ENCODE measurements at regions of chr12 and their contacts with region 1.

Region 1: DNA sequence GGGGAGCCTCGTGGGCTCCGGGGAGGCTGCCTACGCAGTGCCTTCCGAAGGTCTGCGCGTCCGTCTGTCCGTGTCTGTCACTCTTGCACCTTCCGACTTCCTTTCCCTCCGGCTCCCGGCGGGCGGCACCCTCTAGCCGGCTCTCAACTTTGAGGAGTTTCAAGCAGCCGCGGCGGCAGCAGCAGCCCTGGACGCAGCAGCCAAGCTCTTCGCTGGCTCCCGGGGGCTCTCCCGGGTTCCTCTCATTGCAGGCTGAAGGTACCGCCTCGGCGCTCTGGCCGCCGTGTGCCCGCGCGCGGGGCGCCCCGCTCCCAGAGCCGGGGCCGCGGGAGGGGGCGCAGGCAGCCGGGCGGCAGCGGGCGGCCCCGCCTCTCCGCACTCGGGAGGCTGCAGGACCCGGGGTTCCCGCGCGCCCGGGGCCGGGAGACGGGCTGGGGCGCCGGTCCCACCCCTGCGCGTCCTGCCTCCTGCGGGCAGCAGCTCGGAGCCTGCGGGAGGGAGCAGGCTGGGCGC is at the starts of genes AMIGO2 and PCED1B:
- DNase-seq: peak; percentile 74 to 89 (median 76)
- ATAC-seq: peak; percentile 62 to 90 (median 74)
- H3K4me3 ChIP-seq: peak within 1 kb of the TSS; percentile 52 to 92 (median 74)
- H3K27ac ChIP-seq: peak within 1 kb of the TSS; percentile 74 to 95 (median 88)
- H3K4me1 ChIP-seq: peaks cover 0 to 58% (median 13%) of the 10 kb centered on the region in 12 donors
- H3K27me3 ChIP-seq: peaks cover 0 to 23% (median 0%) of the 10 kb centered on the region in 9 donors
- CTCF ChIP-seq: peak in 9 of 12 donors; percentile 21 to 56 (median 36)
- POLR2A ChIP-seq: no peak
- total RNA-seq, gene AMIGO2: 0.77 to 3.0 (median 1.5) TPM
- total RNA-seq, gene PCED1B: 0.39 to 9.5 (median 0.81) TPM in 7 of 9 donors, not detected in the others

Region 2: GRCh38 chr12:47156167-47156736 is 76.7 kb after region 1 on chr12:
- intact Hi-C with region 1: no loop called
- DNase-seq: peak in 2 of 5 donors; percentile 30 to 33
- ATAC-seq: peak in 3 of 4 donors; percentile 55 to 69 (median 68)
- H3K4me3 ChIP-seq: no peak overlapping the region
- H3K27ac ChIP-seq: peak overlapping the region in 1 of 12 donors; percentile 19
- H3K4me1 ChIP-seq: peaks cover 0 to 14% (median 9%) of the 10 kb centered on the region in 12 donors
- H3K27me3 ChIP-seq: no peaks in the 10 kb centered on the region
- CTCF ChIP-seq: no peak
- POLR2A ChIP-seq: no peak

Region 3: DNA sequence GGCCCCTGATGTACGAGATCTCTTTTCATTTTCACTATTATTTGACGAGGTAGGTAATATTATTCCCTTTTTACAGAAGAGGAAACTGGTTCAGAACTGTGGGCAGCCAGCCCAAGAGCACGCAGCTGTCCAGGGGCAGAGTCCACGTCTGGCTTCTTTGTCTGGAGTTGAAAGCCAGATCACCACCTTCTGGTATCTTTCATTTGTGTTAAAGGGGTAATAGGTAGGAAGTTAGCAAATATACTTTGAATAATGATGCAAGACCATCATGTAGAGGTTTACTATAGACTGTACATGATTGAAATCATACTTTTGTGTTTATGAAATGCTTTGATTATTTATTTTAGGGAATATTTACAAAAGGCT is 144.3 kb after region 1 on chr12:
- intact Hi-C with region 1: loop called in 1 of 10 experiments (anchors 10 kb)
- DNase-seq: peak in 4 of 5 donors; percentile 24 to 64 (median 51)
- ATAC-seq: peak in 2 of 4 donors; percentile 62 to 71
- H3K4me3 ChIP-seq: peak overlapping the region in 4 of 12 donors; percentile 10 to 25 (median 22)
- H3K27ac ChIP-seq: peak overlapping the region in 10 of 12 donors; percentile 11 to 55 (median 38)
- H3K4me1 ChIP-seq: peaks cover 0 to 34% (median 6%) of the 10 kb centered on the region in 12 donors
- H3K27me3 ChIP-seq: no peaks in the 10 kb centered on the region
- CTCF ChIP-seq: no peak
- POLR2A ChIP-seq: no peak

Region 4: DNA sequence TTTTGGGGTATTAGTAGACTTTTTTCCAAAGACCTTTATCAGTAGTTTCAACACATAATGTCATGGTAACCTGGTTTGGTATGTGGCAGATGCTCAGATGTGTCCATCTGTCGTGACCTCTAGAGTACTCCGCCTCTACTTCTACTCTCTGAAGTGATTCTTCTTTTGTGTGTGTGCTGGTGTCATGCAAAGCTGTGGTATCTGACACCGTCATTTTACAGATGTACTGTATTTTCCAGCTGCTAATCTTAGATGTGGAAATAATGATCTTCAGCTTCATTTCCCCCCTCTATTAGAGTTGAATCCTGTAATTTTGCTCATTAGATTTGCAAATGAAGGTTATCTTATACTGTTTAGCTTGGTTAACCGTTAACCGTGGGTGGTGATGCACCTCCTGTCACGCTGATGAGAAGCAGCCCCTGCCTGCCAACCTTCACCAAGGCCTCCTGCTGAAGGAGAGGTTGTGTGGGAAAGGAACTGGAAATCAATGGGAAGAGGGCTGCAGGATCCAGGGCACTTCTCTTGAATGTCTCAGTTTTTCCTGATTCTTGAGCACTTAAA is 222.7 kb after region 1 on chr12:
- intact Hi-C with region 1: loop called in 4 of 10 experiments (anchors 5 to 10 kb)
- DNase-seq: no peak
- ATAC-seq: no peak
- H3K4me3 ChIP-seq: no peak overlapping the region
- H3K27ac ChIP-seq: no peak overlapping the region
- H3K4me1 ChIP-seq: no peaks in the 10 kb centered on the region
- H3K27me3 ChIP-seq: no peaks in the 10 kb centered on the region
- CTCF ChIP-seq: no peak
- POLR2A ChIP-seq: no peak

Region 5: GRCh38 chr12:47307680-47308399 is 228.3 kb after region 1 on chr12:
- intact Hi-C with region 1: loop called in 4 of 10 experiments (anchors 5 to 10 kb)
- DNase-seq: peak in 1 of 5 donors; percentile 23
- ATAC-seq: peak in 3 of 4 donors; percentile 82 to 86 (median 82)
- H3K4me3 ChIP-seq: peak overlapping the region in 2 of 12 donors; percentile 17 to 35
- H3K27ac ChIP-seq: no peak overlapping the region
- H3K4me1 ChIP-seq: no peaks in the 10 kb centered on the region
- H3K27me3 ChIP-seq: no peaks in the 10 kb centered on the region
- CTCF ChIP-seq: peak; percentile 30 to 58 (median 49)
- POLR2A ChIP-seq: no peak

Region 6: DNA sequence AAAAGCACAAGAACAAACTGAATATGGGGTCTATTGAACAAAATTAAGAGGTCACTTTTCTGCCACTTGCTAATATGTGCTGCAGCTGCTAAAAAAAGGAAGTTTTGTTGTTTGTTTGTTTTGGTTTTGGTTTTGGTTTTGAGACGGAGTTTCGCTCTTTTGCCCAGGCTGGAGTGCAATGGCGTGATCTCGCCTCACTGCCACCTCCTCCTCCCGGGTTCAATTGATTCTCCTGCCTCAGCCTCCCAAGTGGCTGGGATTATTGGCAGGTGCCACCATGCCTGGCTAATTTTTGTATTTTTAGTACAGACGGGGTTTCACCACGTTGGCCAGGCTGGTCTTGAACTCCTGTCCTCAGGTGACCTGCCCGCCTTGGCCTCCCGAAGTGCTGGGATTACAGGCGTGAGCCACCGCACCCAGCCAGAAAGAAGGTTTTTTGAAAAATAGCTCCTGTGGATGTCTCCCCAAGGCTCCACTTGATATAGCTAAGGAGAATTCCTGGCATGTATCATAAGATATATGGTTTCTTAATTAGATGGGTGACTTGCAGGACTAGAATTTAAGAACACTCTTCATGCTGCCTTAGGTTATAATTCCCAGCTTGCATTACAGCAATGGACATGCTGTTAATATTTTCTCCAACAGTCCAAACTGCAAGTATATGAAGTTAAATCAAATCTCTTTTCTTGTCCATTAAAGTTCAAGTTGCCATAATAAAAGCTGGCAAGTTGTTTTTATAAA is 237.8 kb after region 1 on chr12:
- intact Hi-C with region 1: loop called in 1 of 10 experiments (anchors 5 kb)
- DNase-seq: no peak
- ATAC-seq: no peak
- H3K4me3 ChIP-seq: peak overlapping the region in 8 of 12 donors; percentile 22 to 41 (median 29)
- H3K27ac ChIP-seq: peak overlapping the region in 10 of 12 donors; percentile 36 to 78 (median 56)
- H3K4me1 ChIP-seq: peaks cover 0 to 41% (median 9%) of the 10 kb centered on the region in 12 donors
- H3K27me3 ChIP-seq: no peaks in the 10 kb centered on the region
- CTCF ChIP-seq: no peak
- POLR2A ChIP-seq: no peak

Region 7: DNA sequence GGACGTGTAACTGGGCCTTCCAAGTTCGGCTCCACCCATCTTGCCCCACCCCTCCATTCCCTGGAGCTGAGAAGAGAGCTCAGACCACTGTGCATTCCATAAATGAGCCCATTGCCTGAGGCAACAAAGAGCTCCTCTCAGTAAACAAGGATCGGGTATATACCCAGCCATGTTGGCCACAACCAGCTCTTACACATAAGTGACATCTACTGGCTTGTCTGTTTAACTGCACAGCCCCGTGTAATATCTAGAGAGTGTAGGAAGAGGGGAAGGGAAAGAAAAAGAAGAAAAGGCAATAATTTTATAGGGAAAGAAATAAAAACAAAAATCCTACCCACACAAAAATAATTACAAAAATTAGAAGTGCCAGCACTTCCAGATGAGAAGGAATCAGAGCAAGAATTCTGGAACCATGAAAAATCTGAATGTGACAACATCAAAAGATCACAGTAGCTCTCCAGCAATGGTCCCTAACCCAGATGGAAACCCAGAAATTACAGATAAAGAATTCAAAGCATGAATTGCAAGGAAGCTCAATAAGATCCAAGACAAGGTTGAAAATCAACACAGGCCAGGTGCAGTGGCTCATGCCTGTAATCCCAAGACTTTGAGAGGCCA is 318.2 kb after region 1 on chr12:
- intact Hi-C with region 1: loop called in 2 of 10 experiments (anchors 5 to 10 kb)
- DNase-seq: no peak
- ATAC-seq: peak in 3 of 4 donors; percentile 61 to 74 (median 67)
- H3K4me3 ChIP-seq: no peak overlapping the region
- H3K27ac ChIP-seq: no peak overlapping the region
- H3K4me1 ChIP-seq: peaks cover 0 to 16% (median 6%) of the 10 kb centered on the region in 12 donors
- H3K27me3 ChIP-seq: no peaks in the 10 kb centered on the region
- CTCF ChIP-seq: peak in 10 of 12 donors; percentile 20 to 52 (median 40)
- POLR2A ChIP-seq: no peak